ENCODE measurements at regions of chr16 and their contacts with region 1.

Region 1: DNA sequence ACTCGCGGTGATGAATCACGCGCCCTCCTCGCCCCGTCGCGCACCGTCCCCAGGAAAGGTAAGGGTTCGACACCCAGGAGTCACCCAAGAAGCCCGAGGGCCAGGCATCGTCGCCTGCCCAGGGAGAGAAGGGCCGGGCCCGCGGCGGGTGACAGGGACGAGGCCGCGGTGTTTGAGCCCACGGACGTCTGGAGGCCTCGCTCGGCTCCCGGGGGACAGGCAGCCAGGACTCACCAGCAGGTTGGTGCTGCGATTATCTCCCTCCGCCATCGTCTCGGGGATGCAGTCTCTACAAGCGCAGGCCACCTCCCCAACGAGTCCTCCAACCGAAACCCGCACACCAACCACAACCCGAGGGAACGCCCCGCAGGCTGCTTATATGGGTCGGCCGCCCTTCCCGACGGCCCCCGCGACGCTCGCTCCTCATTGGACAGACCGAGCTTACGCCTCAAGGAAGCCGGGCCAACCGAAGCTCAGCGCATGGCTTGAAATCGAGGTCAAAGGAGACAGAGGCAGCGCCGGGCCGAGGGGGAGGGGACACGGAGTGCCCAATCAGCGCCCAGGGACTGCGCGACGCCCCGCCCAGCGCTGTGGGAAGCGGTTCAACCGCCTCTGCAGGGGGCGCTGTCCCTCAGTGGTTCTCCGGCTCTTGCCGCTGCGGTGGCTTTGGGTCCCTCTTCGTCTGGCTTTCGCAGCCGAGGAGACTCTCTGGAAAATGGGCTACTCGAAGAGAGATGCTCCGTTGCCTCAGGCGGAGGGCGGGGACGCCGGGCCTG is at the start of gene ARL6IP1:
- DNase-seq: peak; percentile 96
- H3K4me3 ChIP-seq: peak within 1 kb of the TSS; percentile 90
- CTCF ChIP-seq: peak; percentile 98

Region 2: DNA sequence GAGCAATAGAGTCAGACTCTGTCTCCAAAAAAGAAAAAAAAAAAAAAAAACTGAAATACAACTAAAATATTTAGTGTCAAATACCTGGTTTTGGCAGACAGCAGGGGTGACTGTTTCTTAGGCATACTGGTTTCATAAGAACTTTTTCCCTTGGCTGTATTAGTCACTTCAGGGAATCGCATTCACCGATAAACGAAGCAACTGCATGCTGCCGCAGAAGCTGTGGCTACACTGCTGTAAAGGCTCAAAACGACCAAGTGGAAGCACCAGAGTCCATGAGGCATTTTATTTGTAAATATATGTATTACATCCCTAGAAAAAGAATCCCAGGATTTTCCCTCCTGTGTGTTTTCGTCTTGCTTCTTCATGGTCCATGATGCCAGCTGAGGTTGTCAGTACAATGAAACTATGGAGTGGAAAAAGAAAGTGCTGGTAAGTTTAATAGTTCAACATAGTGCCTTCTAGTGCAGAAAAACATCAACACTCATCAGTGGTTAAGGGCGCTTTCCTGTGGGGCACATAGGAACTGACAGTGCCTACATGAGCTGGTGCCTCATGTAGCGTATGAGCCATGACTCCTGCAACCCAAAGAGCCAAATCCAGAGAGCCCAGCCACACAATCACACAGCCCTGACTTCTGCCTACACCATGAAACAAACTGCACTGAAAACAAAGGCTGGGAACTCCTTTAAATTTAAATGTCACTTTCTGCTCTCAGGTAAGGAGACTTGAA is 18.5 kb before region 1 on chr16:
- CTCF ChIA-PET with region 1: interaction called, 90 read pairs
- POLR2A ChIA-PET with region 1: interaction called, 99 read pairs
- DNase-seq: no peak
- H3K4me3 ChIP-seq: no peak overlapping the region
- CTCF ChIP-seq: no peak

Region 3: GRCh38 chr16:18816286-18816685 is 14.9 kb after region 1 on chr16:
- CTCF ChIA-PET with region 1: interaction called, 69 read pairs
- POLR2A ChIA-PET with region 1: interaction called, 7 read pairs
- DNase-seq: no peak
- H3K4me3 ChIP-seq: no peak overlapping the region
- CTCF ChIP-seq: no peak

Region 4: GRCh38 chr16:18846416-18846815 is 45.0 kb after region 1 on chr16:
- CTCF ChIA-PET with region 1: interaction called, 27 read pairs
- POLR2A ChIA-PET with region 1: interaction called, 3 read pairs
- DNase-seq: no peak
- H3K4me3 ChIP-seq: no peak overlapping the region
- CTCF ChIP-seq: no peak

Region 5: DNA sequence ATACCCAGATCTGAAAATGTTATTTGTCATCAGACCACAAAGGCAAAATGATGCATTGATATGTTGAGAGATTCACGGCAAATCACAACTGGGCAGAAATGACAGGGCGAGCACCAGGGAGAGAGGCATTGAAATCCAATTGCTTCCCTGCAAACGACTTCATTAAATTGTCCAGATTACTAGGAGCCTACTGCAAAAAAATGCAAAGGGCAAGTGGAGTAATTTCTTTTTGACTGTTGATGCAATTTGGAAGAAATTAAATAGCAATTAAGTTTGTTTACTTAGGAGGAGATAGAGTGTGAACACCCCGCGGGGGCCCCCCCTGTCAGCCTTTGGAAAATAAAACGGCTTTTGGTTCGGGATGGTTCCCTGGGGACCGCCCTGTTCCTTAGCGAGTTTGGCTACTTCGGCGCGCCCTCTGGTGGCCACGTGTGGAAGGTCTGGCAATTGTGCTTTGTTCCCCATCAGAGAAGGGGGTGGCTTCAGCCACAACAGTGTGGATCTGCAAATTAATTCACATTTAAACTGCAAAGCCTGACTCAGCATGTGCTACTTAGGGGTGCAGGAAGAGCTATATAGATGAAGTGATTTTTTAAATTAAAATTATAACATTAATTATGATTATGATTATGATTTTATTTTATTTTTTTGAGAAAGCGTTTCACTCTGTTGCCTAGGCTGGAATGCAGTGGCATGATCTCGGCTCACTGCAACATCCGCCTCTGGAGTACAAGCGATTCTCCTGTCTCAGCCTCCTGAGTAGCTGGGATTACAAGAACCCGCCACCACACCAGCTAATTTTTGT is 167.9 kb after region 1 on chr16:
- CTCF ChIA-PET with region 1: interaction called, 43 read pairs
- POLR2A ChIA-PET with region 1: interaction called, 4 read pairs
- DNase-seq: no peak
- H3K4me3 ChIP-seq: peak overlapping the region; percentile 49
- CTCF ChIP-seq: peak; percentile 95